Esophagus muscularis mucosa (tissue), 4 donors: ENCODE measurements at regions of chr1 and their contacts with region 1.

Region 1: GRCh38 chr1:231337472-231338269 is at the start of gene EXOC8:
- DNase-seq: peak; percentile 98
- H3K4me3 ChIP-seq: peak within 1 kb of the TSS; percentile 58 to 94 (median 80)
- H3K27ac ChIP-seq: peak within 1 kb of the TSS; percentile 90 to 97 (median 95)
- H3K4me1 ChIP-seq: peaks cover 46 to 66% (median 61%) of the 10 kb centered on the region in 4 donors
- H3K27me3 ChIP-seq: no peaks in the 10 kb centered on the region
- CTCF ChIP-seq: no peak
- EP300 ChIP-seq: no peak
- POLR2A ChIP-seq: peak; percentile 83
- total RNA-seq, gene EXOC8: 13.0 to 15.4 (median 14.3) TPM

Region 2: GRCh38 chr1:230621324-230622030 is 716.2 kb before region 1 on chr1:
- intact Hi-C with region 1: no loop called
- DNase-seq: no peak
- H3K4me3 ChIP-seq: no peak overlapping the region
- H3K27ac ChIP-seq: no peak overlapping the region
- H3K4me1 ChIP-seq: no peaks in the 10 kb centered on the region
- H3K27me3 ChIP-seq: peaks cover 0 to 25% (median 0%) of the 10 kb centered on the region in 4 donors
- CTCF ChIP-seq: no peak
- EP300 ChIP-seq: no peak
- POLR2A ChIP-seq: no peak

Region 3: DNA sequence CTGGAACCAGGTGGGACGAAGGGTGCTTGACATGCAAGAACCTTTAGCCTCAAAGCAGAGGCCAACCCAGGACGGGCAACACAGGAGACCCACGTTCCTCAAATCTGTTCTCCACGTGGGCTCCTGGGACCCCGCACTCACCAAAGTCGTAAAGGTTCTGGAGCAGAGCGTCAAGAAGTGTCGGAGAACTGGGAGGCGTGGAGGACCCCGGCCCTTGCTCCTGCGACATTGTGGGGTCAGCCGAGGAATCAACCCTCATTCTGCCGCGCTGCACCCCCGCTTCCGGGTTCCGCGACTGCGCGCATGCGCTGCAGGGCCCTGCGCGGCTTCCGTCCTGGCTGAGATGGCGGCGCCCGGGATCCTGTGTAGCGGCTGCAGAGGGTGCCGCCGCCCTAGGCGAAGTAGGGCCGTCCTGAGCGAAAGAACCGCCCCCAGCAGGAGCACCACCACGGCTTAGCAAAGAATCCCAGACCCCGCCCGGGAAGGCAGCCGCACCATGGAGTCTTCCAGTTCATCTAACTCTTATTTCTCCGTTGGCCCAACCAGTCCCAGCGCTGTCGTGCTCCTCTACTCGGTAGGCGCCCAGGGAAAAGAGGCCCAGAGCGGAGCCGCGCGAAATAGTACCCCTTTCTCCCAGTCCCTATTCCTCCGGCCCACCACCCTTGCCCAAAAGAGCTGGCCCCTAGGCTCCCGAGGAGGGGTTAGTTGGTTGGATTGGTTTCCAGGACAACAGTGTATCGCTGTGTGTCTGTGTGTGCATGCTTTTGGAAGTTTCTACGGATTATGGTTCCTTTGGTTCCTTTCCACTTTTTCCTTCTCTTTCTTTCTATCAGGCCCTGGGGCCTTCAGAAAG is 96.6 kb before region 1 on chr1 and contains the start of gene GNPAT:
- intact Hi-C with region 1: loop called (anchors 5 kb)
- DNase-seq: peak; percentile 95
- H3K4me3 ChIP-seq: peak within 1 kb of the TSS; percentile 63 to 85 (median 72)
- H3K27ac ChIP-seq: peak within 1 kb of the TSS; percentile 79 to 86 (median 83)
- H3K4me1 ChIP-seq: peaks cover 30 to 62% (median 47%) of the 10 kb centered on the region in 4 donors
- H3K27me3 ChIP-seq: no peaks in the 10 kb centered on the region
- CTCF ChIP-seq: peak in 1 of 3 experiments; percentile 10
- EP300 ChIP-seq: no peak
- POLR2A ChIP-seq: peak; percentile 59
- total RNA-seq, gene GNPAT: 40.3 to 52.3 (median 47.2) TPM